ENCODE measurements at regions of chr19 and their contacts with region 1.

Region 1: DNA sequence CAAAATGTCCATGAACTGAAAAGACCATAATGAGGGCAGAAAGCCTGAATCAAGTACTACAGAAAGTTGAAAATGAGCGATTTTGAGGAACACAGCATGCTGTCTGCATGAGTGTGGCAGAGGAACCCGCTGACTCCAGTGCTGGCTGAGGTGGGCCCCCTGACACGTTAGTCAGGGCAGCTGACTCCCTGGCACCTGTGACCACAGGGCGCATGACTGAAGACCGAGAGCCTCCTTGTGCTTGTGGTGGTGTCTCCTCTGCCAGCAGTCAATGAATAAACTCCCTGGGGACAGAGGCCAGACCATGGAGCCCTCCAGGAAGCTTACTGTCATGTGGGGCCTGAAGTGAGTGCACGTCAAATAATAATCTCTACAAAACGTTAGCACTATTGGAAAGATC is 38.4 kb upstream of the VSTM2B start:
- DNase-seq: no peak
- H3K4me3 ChIP-seq: no peak overlapping the region
- H3K27ac ChIP-seq: no peak overlapping the region
- H3K4me1 ChIP-seq: no peaks in the 10 kb centered on the region
- H3K27me3 ChIP-seq: no peaks in the 10 kb centered on the region
- CTCF ChIP-seq: no peak

Region 2: DNA sequence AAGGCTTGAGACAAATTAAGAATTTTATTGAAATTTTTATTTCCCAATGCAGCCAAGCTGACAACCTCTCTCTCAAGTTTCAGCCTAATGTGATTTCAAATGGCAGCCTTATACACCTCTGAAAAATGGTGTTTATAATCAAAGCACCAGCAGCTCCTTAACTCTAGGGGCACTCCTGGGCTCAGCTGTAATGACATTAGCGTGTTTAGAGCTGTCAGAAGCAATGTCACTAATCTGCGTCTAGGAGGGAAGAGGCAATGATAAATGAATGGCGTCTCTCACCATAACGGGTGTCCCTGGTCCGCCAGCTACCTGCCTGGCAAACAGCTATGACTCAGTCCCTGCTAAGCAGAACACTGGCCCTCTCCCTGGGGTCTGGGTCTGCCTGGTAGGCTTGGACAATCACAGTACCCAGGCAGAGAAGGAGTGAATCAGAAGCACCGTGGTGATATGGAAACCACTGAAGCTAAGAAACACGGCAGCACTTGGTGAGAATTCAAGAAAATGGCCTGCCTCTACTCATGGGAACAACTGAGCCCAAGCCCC is 93.4 kb before region 1 on chr19:
- CTCF ChIA-PET with region 1: no interaction called
- dilution Hi-C with region 1: no loop called
- in situ Hi-C with region 1: no loop called
- intact Hi-C with region 1: no loop called
- DNase-seq: no peak
- H3K4me3 ChIP-seq: no peak overlapping the region
- H3K27ac ChIP-seq: no peak overlapping the region
- H3K4me1 ChIP-seq: no peaks in the 10 kb centered on the region
- H3K27me3 ChIP-seq: no peaks in the 10 kb centered on the region
- CTCF ChIP-seq: no peak

Region 3: DNA sequence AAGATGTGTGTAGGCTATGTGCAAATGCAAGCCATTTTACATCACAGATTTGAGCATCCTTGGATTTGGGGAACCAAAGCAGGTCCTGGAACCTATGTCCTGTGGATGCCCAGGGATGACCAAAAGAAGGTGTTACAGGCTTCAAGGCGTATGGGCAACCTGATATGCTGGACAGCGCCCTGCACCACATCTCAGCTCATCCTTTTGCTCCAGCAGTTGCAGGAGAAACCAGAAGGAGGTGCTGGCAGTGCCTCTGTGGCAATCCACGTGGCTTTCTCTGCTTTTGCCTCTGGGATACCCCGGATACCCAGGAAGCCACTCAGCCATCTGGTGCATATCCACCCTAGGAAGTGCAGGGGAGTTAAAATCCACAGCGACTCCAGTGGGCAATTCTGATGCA is 71.9 kb before region 1 on chr19:
- CTCF ChIA-PET with region 1: no interaction called
- dilution Hi-C with region 1: loop called (anchors 5 kb)
- in situ Hi-C with region 1: no loop called
- intact Hi-C with region 1: no loop called
- DNase-seq: no peak
- H3K4me3 ChIP-seq: no peak overlapping the region
- H3K27ac ChIP-seq: no peak overlapping the region
- H3K4me1 ChIP-seq: no peaks in the 10 kb centered on the region
- H3K27me3 ChIP-seq: no peaks in the 10 kb centered on the region
- CTCF ChIP-seq: no peak

Region 4: DNA sequence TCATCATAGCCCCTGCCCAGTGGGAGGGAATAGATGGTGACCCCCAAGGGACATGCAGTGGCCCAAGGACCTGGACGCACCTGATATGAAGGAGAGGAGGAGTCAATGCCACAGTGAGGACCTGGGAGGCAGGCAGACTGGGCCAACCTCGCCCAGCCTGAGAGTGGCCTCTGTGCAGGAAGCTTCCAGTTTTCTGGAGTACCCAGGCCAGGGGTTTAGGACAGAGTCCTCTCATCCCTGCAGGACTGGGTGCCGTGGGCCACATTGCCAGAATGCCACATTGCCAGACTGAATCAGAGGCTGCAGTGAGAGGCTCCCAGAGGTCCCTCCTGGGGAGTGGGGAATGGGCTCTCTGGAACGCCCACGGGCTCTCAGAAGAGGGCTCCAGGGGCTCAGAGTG is 44.5 kb before region 1 on chr19:
- CTCF ChIA-PET with region 1: no interaction called
- dilution Hi-C with region 1: loop called (anchors 5 kb)
- in situ Hi-C with region 1: no loop called
- intact Hi-C with region 1: no loop called
- DNase-seq: no peak
- H3K4me3 ChIP-seq: no peak overlapping the region
- H3K27ac ChIP-seq: no peak overlapping the region
- H3K4me1 ChIP-seq: no peaks in the 10 kb centered on the region
- H3K27me3 ChIP-seq: no peaks in the 10 kb centered on the region
- CTCF ChIP-seq: no peak

Region 5: DNA sequence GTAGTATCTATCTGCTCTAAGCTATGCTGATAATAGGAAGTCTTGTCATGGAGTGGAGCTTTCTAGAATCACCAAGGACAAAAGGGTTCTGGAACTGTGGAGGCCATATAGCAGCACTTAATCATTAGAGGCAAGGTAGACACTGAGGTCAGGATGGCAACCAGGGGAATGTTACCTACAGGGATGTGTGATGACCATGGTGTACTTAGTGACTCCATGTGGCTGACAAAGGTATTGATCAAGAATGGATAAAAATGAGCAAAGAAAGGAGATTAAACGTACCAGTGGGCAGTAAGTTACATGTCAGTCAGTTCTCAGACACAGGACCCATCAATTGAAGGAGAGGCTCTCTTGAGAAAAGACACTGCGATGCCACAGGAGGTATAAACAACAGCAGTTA is 33.8 kb before region 1 on chr19:
- CTCF ChIA-PET with region 1: no interaction called
- dilution Hi-C with region 1: no loop called
- in situ Hi-C with region 1: no loop called
- intact Hi-C with region 1: no loop called
- DNase-seq: no peak
- H3K4me3 ChIP-seq: no peak overlapping the region
- H3K27ac ChIP-seq: no peak overlapping the region
- H3K4me1 ChIP-seq: no peaks in the 10 kb centered on the region
- H3K27me3 ChIP-seq: no peaks in the 10 kb centered on the region
- CTCF ChIP-seq: no peak

Region 6: GRCh38 chr19:29549105-29550070 is 62.0 kb after region 1 on chr19:
- CTCF ChIA-PET with region 1: no interaction called
- dilution Hi-C with region 1: loop called (anchors 5 kb)
- in situ Hi-C with region 1: no loop called
- intact Hi-C with region 1: no loop called
- DNase-seq: no peak
- H3K4me3 ChIP-seq: no peak overlapping the region
- H3K27ac ChIP-seq: no peak overlapping the region
- H3K4me1 ChIP-seq: no peaks in the 10 kb centered on the region
- H3K27me3 ChIP-seq: no peaks in the 10 kb centered on the region
- CTCF ChIP-seq: no peak

Region 7: GRCh38 chr19:29587518-29587986 is 100.1 kb after region 1 on chr19:
- CTCF ChIA-PET with region 1: no interaction called
- dilution Hi-C with region 1: no loop called
- in situ Hi-C with region 1: no loop called
- intact Hi-C with region 1: no loop called
- DNase-seq: peak; percentile 58
- H3K4me3 ChIP-seq: no peak overlapping the region
- H3K27ac ChIP-seq: no peak overlapping the region
- H3K4me1 ChIP-seq: no peaks in the 10 kb centered on the region
- H3K27me3 ChIP-seq: peaks cover 3% of the 10 kb centered on the region
- CTCF ChIP-seq: no peak

Measured in mammary epithelial cell (primary cell).